ENCODE measurements at regions of chr6 and their contacts with region 1.

Region 1: DNA sequence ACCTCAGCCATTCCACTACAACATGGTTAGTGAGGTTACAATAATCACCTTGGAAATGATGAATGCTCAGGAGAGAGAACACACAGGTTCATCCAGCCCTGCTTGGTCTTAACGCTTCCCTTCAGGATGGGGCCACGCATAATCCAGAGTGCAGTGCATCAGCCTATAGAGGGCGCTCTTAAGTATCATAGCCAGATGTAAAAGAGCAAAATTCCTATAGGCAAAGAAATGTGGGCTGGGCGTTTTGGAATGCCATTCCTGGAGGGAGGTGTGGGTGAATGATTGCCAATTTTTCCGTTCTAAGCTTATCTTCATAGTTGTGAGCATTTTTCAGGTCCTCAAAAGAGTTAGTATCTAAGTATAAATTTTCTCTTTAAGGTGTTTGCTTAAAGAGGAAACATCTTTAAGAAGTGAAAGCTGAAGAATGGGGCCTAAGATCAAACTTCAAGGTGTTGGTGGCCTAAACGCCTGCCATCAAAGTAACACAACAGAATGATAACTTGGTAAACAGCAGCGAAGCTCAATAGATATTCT is 1.8 kb downstream of the RIPOR2 start:
- DNase-seq: peak in 1 of 2 donors; percentile 84
- ATAC-seq: peak; percentile 4 to 48 (median 26)
- H3K4me3 ChIP-seq: peak overlapping the region; percentile 85
- H3K4me3 Mint-ChIP-seq: peak overlapping the region; percentile 99
- H3K27ac ChIP-seq: peak overlapping the region; percentile 67
- H3K27ac Mint-ChIP-seq: peak overlapping the region; percentile 71 to 89
- H3K4me1 ChIP-seq: peaks cover 40% of the 10 kb centered on the region
- H3K4me1 Mint-ChIP-seq: peaks cover 91 to 93% of the 10 kb centered on the region in 2 donors
- H3K27me3 ChIP-seq: no peaks in the 10 kb centered on the region
- H3K27me3 Mint-ChIP-seq: no peaks in the 10 kb centered on the region
- CTCF ChIP-seq: peak; percentile 92

Region 2: DNA sequence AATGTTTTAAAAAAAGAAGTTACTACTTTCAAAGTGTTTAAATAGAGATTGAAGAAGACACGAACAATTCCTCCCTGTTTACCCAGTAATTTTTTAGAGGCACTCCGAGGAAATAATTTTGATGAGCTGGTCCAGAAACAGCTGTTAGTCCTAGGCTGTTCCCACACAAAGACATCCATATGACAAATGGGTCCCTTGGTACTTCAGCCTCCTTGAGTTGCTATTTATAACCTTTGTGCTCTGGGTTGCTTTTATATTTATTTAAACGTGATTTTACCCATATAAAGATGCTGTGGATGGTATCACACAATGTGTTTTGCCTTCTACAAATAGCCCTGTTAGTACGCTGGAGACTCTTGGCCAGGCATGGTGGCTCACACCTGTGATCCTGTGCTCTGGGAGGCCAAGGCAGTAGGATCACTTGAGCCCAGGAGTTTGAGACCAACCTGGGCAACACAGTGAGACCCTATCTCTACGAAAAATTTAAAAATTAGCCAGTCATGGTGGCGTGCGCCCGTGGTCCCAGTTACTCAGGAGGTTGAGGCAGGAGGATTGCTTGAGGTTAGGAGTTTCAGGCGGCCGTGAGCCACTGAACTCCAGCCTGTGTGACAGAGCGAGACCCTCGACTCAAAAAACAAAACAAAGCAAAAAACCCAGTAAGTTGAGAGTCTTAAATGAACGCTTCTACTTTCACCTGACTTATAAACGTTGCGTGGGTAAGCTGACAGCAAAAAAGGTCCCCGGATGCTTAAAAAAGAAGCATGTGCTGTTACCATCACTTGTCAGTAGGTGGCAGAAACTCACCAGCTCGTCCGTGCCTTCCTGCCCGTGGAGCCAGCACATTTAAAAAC is 78.3 kb before region 1 on chr6:
- intact Hi-C with region 1: loop called (anchors 2 kb)
- DNase-seq: peak; percentile 48 to 92
- ATAC-seq: peak; percentile 77 to 84 (median 83)
- H3K4me3 ChIP-seq: no peak overlapping the region
- H3K4me3 Mint-ChIP-seq: peak overlapping the region; percentile 49
- H3K27ac ChIP-seq: peak overlapping the region; percentile 45
- H3K27ac Mint-ChIP-seq: peak overlapping the region; percentile 93 to 95
- H3K4me1 ChIP-seq: peaks cover 45% of the 10 kb centered on the region
- H3K4me1 Mint-ChIP-seq: peaks cover 50 to 59% of the 10 kb centered on the region in 2 donors
- H3K27me3 ChIP-seq: no peaks in the 10 kb centered on the region
- H3K27me3 Mint-ChIP-seq: no peaks in the 10 kb centered on the region
- CTCF ChIP-seq: peak; percentile 84

Region 3: GRCh38 chr6:24949020-24949569 is 15.2 kb after region 1 on chr6:
- intact Hi-C with region 1: loop called (anchors 1 kb)
- DNase-seq: peak in 1 of 2 donors; percentile 81
- ATAC-seq: peak; percentile 53 to 68 (median 67)
- H3K4me3 ChIP-seq: no peak overlapping the region
- H3K4me3 Mint-ChIP-seq: peak overlapping the region; percentile 83
- H3K27ac ChIP-seq: peak overlapping the region; percentile 80
- H3K27ac Mint-ChIP-seq: peak overlapping the region; percentile 94
- H3K4me1 ChIP-seq: peaks cover 68% of the 10 kb centered on the region
- H3K4me1 Mint-ChIP-seq: peaks cover 76 to 84% of the 10 kb centered on the region in 2 donors
- H3K27me3 ChIP-seq: no peaks in the 10 kb centered on the region
- H3K27me3 Mint-ChIP-seq: no peaks in the 10 kb centered on the region
- CTCF ChIP-seq: no peak

Region 4: DNA sequence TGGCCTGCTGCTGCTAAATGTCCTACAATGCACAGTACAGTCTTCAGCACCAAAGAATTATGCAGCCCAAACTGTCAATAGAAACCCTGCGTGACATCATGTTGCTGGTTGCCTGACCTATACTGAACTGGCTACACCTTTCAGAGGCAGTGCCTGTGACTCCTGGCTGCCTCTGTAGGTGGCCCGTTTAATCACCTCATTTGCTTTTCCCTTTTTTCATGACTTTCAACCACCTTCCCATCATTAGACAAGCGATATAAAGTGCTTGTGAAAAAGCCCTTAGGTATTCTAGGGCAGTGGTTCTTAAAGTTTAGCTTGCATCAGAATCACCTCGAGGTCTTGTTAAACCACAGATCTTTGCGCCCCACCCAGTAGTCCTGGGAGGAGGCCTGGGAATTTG is 34.9 kb after region 1 on chr6:
- intact Hi-C with region 1: loop called (anchors 1 kb)
- DNase-seq: peak in 1 of 2 donors; percentile 38
- ATAC-seq: peak; percentile 73 to 83 (median 77)
- H3K4me3 ChIP-seq: no peak overlapping the region
- H3K4me3 Mint-ChIP-seq: peak overlapping the region; percentile 61
- H3K27ac ChIP-seq: peak overlapping the region; percentile 67
- H3K27ac Mint-ChIP-seq: peak overlapping the region; percentile 90 to 93
- H3K4me1 ChIP-seq: peaks cover 43% of the 10 kb centered on the region
- H3K4me1 Mint-ChIP-seq: peaks cover 74 to 92% of the 10 kb centered on the region in 2 donors
- H3K27me3 ChIP-seq: no peaks in the 10 kb centered on the region
- H3K27me3 Mint-ChIP-seq: no peaks in the 10 kb centered on the region
- CTCF ChIP-seq: no peak

Region 5: DNA sequence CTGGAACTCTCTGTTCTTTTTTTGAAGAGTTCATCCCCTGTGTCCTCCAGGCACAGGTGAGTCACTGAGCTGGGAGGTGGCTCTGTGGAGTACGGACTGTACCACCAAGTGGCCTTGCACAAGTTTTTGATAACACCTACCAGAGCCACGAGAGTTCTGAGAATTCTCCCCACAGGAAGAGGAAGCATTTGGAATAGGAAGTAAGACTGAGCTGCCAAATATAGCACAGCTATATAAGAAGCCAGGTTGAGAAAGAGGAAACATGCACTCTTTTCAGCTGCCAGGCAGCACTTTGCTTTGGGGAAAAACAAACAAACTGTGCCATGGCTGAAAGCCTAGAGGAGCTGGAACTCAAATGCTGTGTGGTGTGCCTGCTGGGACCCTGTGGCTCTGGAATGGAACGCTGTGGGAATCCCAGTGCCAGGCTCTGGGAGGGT is 72.6 kb after region 1 on chr6:
- intact Hi-C with region 1: loop called (anchors 2 kb)
- DNase-seq: peak in 1 of 2 donors; percentile 62
- ATAC-seq: peak; percentile 21 to 78 (median 34)
- H3K4me3 ChIP-seq: no peak overlapping the region
- H3K4me3 Mint-ChIP-seq: peak overlapping the region; percentile 83
- H3K27ac ChIP-seq: peak overlapping the region; percentile 86
- H3K27ac Mint-ChIP-seq: peak overlapping the region; percentile 91 to 95
- H3K4me1 ChIP-seq: peaks cover 51% of the 10 kb centered on the region
- H3K4me1 Mint-ChIP-seq: peaks cover 74 to 81% of the 10 kb centered on the region in 2 donors
- H3K27me3 ChIP-seq: no peaks in the 10 kb centered on the region
- H3K27me3 Mint-ChIP-seq: no peaks in the 10 kb centered on the region
- CTCF ChIP-seq: no peak

Region 6: DNA sequence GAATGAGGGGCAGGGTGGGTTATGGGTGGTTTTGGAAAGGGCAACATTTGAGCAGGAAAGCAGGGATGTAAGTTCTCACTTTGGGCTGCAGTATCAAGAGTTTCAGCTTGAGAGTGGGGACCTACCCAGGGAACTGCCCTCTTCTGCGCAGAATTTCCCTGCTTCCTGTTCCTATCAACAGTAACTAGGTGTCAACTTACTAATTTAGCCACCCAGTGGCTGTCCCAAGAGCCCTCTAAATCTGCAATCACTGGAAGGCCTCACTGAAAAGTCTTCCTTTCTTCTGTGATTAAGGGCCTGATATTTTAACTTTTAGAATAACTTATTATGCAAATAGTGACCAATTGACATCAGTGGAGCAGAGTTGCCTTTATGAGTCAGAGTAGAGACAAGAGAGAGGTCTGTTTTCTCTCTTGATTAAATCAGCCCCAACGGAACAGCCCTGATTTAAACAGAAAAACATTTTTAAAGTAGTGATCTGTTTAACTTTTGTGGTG is 120.0 kb after region 1 on chr6:
- intact Hi-C with region 1: no loop called
- DNase-seq: peak; percentile 30 to 70
- ATAC-seq: peak; percentile 66 to 80 (median 73)
- H3K4me3 ChIP-seq: no peak overlapping the region
- H3K4me3 Mint-ChIP-seq: peak overlapping the region; percentile 52
- H3K27ac ChIP-seq: peak overlapping the region; percentile 36
- H3K27ac Mint-ChIP-seq: peak overlapping the region; percentile 41 to 72
- H3K4me1 ChIP-seq: peaks cover 54% of the 10 kb centered on the region
- H3K4me1 Mint-ChIP-seq: peaks cover 58 to 66% of the 10 kb centered on the region in 2 donors
- H3K27me3 ChIP-seq: no peaks in the 10 kb centered on the region
- H3K27me3 Mint-ChIP-seq: no peaks in the 10 kb centered on the region
- CTCF ChIP-seq: no peak

Region 7: DNA sequence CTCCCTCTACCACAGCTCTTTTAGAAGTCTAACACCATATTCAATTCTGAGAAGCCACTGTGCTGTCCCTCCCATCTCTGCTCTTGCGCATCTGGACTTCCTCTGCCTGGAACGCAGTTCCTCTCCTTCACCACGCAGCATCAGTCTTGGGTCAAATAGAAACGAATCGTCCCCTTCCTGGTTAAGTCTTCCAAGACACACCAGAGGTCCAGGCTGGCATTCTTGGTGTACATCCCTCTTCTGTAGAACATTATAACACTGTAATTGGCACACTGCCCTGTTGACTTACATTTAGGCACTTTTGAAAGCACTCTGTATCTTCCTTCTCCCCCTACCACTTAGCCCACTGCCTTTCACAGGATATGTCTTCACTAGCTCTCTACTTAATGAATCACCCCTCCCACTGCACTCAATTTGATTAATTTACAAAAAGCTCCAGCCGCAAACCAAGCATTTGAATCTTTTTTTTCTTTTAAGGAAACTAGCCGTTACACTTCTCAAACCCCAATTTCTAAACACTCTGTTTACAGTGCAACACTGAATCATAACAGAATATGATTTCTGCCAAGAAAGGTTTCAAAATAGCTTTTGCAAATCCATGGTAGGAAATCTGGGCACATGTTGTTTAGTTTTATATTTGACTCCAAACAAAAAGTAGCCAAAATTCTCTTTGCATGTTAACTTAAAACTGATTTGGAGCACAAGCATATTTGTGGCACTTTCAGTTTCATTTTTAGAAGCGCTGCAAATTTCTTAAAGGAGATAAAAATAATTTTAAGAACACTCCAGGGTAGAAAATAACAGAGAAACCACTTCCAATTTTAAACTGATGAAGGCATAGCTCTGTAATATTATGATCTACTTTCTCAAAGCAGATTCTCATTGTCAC is 204.5 kb after region 1 on chr6:
- intact Hi-C with region 1: loop called (anchors 5 kb)
- DNase-seq: peak; percentile 57 to 83
- ATAC-seq: peak; percentile 84 to 92 (median 90)
- H3K4me3 ChIP-seq: peak overlapping the region; percentile 59
- H3K4me3 Mint-ChIP-seq: peak overlapping the region; percentile 91
- H3K27ac ChIP-seq: peak overlapping the region; percentile 93
- H3K27ac Mint-ChIP-seq: peak overlapping the region; percentile 94
- H3K4me1 ChIP-seq: peaks cover 11% of the 10 kb centered on the region
- H3K4me1 Mint-ChIP-seq: peaks cover 39 to 42% of the 10 kb centered on the region in 2 donors
- H3K27me3 ChIP-seq: no peaks in the 10 kb centered on the region
- H3K27me3 Mint-ChIP-seq: no peaks in the 10 kb centered on the region
- CTCF ChIP-seq: no peak